Dorsolateral prefrontal cortex (tissue), 120 donors: ENCODE measurements at regions of chr19 and their contacts with region 1.

Region 1: DNA sequence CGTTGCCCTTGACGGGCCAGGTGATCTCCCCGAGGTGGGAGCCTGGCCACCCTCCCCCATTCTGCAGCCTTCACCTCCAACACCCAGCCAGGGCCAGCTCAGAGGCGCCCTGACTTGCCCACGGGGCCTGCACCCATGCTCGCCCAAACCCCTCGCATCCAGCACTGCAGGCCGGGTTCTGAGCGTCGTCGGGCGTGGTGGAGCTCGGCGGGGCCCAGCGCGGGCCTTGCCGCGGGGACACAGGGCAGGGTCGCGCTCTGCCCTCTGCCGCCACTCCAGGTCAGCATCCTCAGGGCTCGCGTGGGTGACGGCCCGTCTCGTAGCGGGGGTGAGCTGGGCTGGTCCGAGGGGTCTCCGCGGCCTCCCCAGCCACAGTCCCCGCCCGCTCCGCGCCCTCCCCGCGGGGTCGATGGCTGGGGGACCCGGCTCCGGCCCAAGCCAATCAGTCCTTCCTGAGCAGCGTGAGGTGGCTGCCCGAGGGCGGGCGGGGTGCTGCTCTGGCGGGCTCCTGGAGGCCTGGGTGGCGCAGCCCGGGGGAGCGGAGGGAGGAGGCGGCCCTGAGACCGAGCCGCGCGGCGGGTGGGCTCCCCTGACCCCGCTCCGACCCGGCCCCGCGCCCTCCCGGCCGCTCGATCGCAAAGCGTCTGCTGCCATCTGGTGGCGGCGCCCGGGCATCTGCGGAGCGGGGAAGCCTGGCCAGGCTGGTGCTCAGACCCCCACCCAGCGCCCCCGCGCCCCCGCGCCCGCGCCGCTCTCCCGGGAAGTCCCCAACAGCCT is 61.4 kb downstream of the CCNE1 start:
- DNase-seq: peak in 8 of 10 donors; percentile 32 to 78 (median 58)
- H3K4me3 ChIP-seq: peak overlapping the region; percentile 37 to 80 (median 64)
- H3K27ac ChIP-seq: peak overlapping the region in 5 of 59 donors; percentile 23 to 71 (median 49)
- H3K27me3 ChIP-seq: peaks cover 0 to 4% (median 0%) of the 10 kb centered on the region in 45 donors
- CTCF ChIP-seq: peak; percentile 52 to 98 (median 88)

Region 2: GRCh38 chr19:29610563-29611271 is 262.5 kb before region 1 on chr19:
- intact Hi-C with region 1: loop called (anchors 5 to 10 kb)
- DNase-seq: peak; percentile 68 to 88 (median 81)
- H3K4me3 ChIP-seq: peak overlapping the region in 3 of 59 donors; percentile 3 to 9 (median 5)
- H3K27ac ChIP-seq: peak overlapping the region in 16 of 59 donors; percentile 6 to 47 (median 26)
- H3K27me3 ChIP-seq: no peaks in the 10 kb centered on the region
- CTCF ChIP-seq: peak; percentile 60 to 96 (median 89)

Region 3: GRCh38 chr19:29735800-29736199 is 137.4 kb before region 1 on chr19:
- intact Hi-C with region 1: loop called (anchors 1 to 2 kb)
- DNase-seq: no peak
- H3K4me3 ChIP-seq: no peak overlapping the region
- H3K27ac ChIP-seq: no peak overlapping the region
- H3K27me3 ChIP-seq: no peaks in the 10 kb centered on the region
- CTCF ChIP-seq: no peak

Region 4: DNA sequence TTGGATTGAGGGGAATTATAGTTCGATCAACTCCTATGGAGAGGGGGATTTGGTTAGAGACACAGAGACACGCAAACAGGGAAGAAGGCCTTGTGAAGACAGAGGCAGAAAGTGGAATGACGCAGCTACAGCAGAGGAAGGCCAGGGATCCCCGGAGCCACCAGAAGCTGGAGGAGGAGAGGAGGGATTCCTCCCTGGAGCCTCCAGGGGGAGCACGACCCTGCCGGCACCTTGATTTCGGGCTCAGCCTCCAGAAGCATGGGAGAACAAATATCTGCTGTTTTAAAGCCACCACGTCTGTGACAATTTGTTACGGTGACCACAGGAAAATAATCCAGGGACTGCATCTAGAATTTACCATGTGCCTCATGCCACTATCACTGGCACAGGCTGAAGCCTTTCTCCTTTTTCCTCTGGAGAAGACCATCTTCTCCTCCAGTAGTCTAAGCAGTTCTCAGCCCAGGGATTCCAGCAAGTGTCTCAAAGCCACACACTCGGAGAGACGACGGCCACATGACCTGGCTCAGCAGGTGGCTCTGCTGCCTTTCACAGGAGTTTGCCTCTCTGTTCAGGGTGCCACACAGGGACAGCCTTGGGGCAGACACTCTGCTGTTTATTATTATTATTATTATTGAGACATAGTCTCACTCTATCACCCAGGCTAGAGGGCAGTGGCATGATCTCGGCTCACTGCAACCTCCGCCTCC is 101.4 kb before region 1 on chr19:
- intact Hi-C with region 1: loop called in 1 of 2 experiments (anchors 5 kb)
- DNase-seq: peak in 8 of 10 donors; percentile 33 to 68 (median 46)
- H3K4me3 ChIP-seq: no peak overlapping the region
- H3K27ac ChIP-seq: peak overlapping the region in 1 of 59 donors; percentile 18
- H3K27me3 ChIP-seq: no peaks in the 10 kb centered on the region
- CTCF ChIP-seq: peak in 55 of 56 donors; percentile 31 to 77 (median 64)

Region 5: GRCh38 chr19:30046522-30046921 is 173.3 kb after region 1 on chr19:
- intact Hi-C with region 1: no loop called
- DNase-seq: peak in 1 of 10 donors; percentile 28
- H3K4me3 ChIP-seq: peak overlapping the region in 15 of 59 donors; percentile 3 to 54 (median 17)
- H3K27ac ChIP-seq: peak overlapping the region in 57 of 59 donors; percentile 1 to 99 (median 92)
- H3K27me3 ChIP-seq: no peaks in the 10 kb centered on the region
- CTCF ChIP-seq: peak; percentile 17 to 82 (median 66)

Region 6: GRCh38 chr19:30293051-30293785 is 420.0 kb after region 1 on chr19:
- intact Hi-C with region 1: no loop called
- DNase-seq: peak in 8 of 10 donors; percentile 41 to 82 (median 61)
- H3K4me3 ChIP-seq: peak overlapping the region in 31 of 59 donors; percentile 1 to 56 (median 20)
- H3K27ac ChIP-seq: peak overlapping the region; percentile 24 to 97 (median 87)
- H3K27me3 ChIP-seq: peaks cover 0 to 5% (median 0%) of the 10 kb centered on the region in 45 donors
- CTCF ChIP-seq: peak in 3 of 56 donors; percentile 6 to 15 (median 12)

Region 7: GRCh38 chr19:30669329-30670010 is 796.3 kb after region 1 on chr19:
- intact Hi-C with region 1: loop called in 1 of 2 experiments (anchors 10 kb)
- DNase-seq: peak in 9 of 10 donors; percentile 76 to 85 (median 80)
- H3K4me3 ChIP-seq: peak overlapping the region in 46 of 59 donors; percentile 4 to 52 (median 30)
- H3K27ac ChIP-seq: peak overlapping the region in 6 of 59 donors; percentile 6 to 46 (median 20)
- H3K27me3 ChIP-seq: peaks cover 0 to 10% (median 0%) of the 10 kb centered on the region in 45 donors
- CTCF ChIP-seq: peak; percentile 61 to 92 (median 85)